PC-9 (cell line): ENCODE measurements at regions of chr1 and their contacts with region 1.

Region 1: GRCh38 chr1:230994860-230995259 is 16.0 kb downstream of the ARV1 start:
- DNase-seq: no peak
- H3K4me3 ChIP-seq: no peak overlapping the region
- H3K27ac ChIP-seq: no peak overlapping the region
- H3K4me1 ChIP-seq: no peaks in the 10 kb centered on the region
- H3K27me3 ChIP-seq: no peaks in the 10 kb centered on the region
- CTCF ChIP-seq: no peak

Region 2: DNA sequence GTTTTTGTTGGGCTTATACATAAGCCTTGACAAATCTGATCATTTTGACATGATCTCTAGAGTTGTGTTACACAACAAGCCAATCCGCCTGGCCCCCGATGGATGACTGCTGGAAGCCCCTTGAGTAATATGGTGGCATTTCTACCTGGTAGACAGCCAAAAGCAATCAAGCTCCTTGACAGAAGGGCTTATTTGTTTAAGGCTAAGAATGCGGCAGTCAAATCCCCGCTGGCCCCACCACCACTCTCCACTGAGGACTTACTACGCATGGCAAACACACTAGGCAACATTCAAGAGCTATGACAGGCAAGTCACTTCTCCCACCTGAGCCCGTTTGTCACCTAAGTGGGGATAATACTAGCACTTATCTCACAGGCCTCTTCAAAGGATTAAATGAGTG is 93.2 kb before region 1 on chr1:
- CTCF ChIA-PET with region 1: interaction called, 10 read pairs
- POLR2A ChIA-PET with region 1: no interaction called
- intact Hi-C with region 1: no loop called
- DNase-seq: no peak
- H3K4me3 ChIP-seq: no peak overlapping the region
- H3K27ac ChIP-seq: no peak overlapping the region
- H3K4me1 ChIP-seq: no peaks in the 10 kb centered on the region
- H3K27me3 ChIP-seq: no peaks in the 10 kb centered on the region
- CTCF ChIP-seq: no peak